Activated CD8-positive, alpha-beta T cell treated with anti-CD3 and anti-CD28 coated beads, Interleukin-2, amount 10 ng/mL, durations not matched to agents 7 days and 5 days (primary cell): ENCODE measurements at regions of chr1 and their contacts with region 1.

Region 1: DNA sequence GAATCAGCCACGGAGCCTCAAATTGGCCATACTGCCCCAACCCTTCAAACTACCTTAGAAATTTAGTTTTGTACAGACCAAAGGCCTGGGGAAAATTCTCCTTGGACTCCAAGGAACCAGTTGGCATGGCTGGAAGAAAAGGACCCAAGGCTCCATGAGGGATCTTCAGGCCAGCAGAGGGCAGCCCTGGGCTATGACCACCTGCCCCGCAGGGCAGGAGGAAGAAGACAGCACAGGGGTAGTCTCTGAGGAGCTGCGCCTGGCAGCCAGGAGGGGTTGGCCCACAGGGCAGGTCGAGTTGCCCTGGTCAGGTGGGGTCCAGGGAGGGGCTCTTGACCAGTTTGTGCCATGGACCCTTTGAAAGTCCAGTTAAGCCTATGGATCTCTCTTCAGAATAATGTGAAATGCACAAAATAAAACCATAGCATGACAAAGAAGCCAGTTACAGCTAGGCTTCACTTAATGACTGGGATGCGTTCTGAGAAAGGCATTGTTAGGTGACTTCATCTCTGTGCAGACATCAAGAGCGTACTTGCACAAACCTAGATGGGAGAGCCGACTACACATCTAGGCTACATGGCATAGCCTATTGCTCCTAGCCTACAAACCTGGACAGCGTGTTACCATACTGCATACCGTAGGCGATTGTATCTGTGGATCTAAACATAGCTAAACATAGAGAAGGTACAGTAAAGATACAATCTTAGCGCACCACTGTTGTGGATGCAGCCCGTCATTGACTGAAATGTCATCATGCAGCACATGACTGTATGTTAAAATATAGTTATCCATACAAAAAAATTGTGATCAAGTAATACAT is 26.1 kb downstream of the CACNA1S start:
- DNase-seq: peak; percentile 47
- ATAC-seq: peak; percentile 82
- H3K4me3 Mint-ChIP-seq: no peak overlapping the region
- H3K27ac Mint-ChIP-seq: no peak overlapping the region
- H3K4me1 Mint-ChIP-seq: no peaks in the 10 kb centered on the region
- H3K27me3 Mint-ChIP-seq: peaks cover 5% of the 10 kb centered on the region

Region 2: GRCh38 chr1:200774735-200775444 is 311.2 kb before region 1 on chr1:
- CTCF ChIA-PET with region 1: no interaction called
- POLR2A ChIA-PET with region 1: no interaction called
- DNase-seq: no peak
- ATAC-seq: no peak
- H3K4me3 Mint-ChIP-seq: no peak overlapping the region
- H3K27ac Mint-ChIP-seq: no peak overlapping the region
- H3K4me1 Mint-ChIP-seq: no peaks in the 10 kb centered on the region
- H3K27me3 Mint-ChIP-seq: no peaks in the 10 kb centered on the region

Region 3: GRCh38 chr1:200866521-200866920 is 219.6 kb before region 1 on chr1:
- CTCF ChIA-PET with region 1: no interaction called
- POLR2A ChIA-PET with region 1: no interaction called
- DNase-seq: peak; percentile 69
- ATAC-seq: peak; percentile 87
- H3K4me3 Mint-ChIP-seq: no peak overlapping the region
- H3K27ac Mint-ChIP-seq: no peak overlapping the region
- H3K4me1 Mint-ChIP-seq: peaks cover 57% of the 10 kb centered on the region
- H3K27me3 Mint-ChIP-seq: peaks cover 23% of the 10 kb centered on the region

Region 4: DNA sequence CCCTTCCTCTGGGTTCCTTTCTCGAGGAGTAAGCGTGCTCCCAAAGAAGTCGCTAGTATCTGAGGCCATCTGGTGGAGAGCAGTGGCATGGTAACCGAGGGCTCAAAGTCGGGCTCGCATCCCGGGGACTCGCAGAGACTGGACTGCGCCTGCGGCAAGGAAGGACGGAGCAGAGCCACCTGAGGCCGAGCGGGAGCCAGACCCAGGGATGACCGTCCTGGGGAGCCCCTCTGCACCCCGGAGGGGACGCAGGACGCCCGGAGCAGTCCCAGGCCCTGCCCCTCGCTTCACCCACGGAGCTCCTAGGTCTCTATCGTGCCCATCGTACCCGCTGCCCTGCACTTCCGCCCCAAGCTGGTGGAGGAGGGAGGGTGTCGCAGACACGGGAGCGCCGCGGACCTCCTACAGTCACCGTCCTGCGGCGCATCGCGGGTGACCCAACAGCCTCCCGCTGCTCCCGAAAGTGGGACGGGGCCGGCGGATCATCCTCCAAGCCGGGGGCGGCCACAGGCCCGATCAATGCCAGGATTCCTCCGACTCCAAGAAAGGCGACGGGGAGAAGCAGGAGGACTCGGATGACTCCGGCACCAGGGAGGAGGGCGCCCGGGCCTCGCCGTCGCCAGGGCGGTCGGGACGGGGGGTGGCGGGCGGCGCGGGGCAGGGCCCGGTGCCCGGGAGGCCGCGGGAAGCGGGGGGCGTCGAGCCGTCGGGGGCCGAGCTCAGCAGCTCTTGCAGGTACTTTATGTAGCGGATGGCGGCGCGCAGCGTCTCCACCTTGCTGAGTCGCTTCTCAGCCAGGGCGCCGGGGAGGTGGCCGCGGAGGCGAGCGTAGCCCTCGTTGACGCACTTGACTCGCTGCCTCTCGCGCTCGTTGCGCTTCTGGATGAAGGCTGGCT is 28.4 kb after region 1 on chr1:
- CTCF ChIA-PET with region 1: interaction called, 22 read pairs
- POLR2A ChIA-PET with region 1: no interaction called
- DNase-seq: peak; percentile 79
- ATAC-seq: peak; percentile 91
- H3K4me3 Mint-ChIP-seq: peak overlapping the region; percentile 74
- H3K27ac Mint-ChIP-seq: peak overlapping the region; percentile 63
- H3K4me1 Mint-ChIP-seq: peaks cover 8% of the 10 kb centered on the region
- H3K27me3 Mint-ChIP-seq: peaks cover 11% of the 10 kb centered on the region

Region 5: DNA sequence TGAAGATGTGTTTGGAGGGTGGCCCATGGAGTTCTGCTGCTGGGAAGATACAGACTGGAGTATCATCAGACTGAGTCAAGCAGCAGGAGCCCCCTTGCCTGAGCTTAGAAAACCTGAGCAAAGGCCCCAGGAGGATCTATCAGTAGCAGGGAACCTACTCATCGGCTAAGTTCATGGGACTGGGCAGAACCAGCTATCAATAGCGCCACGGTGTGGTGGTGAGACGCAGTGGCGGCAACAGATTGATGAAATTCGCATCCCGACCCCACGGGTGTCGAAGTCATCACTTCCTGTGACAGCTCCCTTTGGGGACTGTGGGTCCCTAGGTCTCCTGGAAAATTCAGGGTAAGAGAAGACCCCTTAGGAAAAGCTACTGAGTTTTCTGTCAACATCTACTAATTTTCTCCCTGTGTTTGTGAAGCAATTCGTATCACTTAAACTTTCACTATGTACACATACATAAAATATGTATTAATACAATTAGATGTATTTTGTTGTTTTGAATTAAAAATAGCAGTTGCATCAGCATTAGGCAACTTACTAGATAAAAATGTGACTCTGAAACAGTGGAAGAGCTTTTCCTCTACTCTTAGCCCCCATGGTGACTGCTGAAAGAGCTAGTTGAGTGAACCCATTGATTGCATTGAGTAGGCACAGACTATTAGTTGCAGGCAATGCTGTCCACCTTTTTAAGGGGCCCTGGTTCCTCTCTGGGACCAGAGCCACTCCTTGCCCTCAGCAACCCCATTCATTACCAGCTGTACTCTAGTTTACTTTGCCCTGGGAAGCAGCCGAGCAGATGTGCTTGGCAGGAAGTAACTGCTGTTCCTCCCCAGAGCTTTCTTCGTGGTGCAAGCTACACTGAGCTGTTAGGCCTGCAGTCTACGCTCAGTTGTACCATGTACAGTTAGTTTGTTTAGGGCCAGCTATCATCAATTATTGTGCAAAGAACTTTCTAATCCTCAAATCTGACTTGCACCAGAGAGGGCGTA is 33.4 kb after region 1 on chr1:
- CTCF ChIA-PET with region 1: interaction called, 22 read pairs
- POLR2A ChIA-PET with region 1: no interaction called
- DNase-seq: peak; percentile 66
- ATAC-seq: no peak
- H3K4me3 Mint-ChIP-seq: no peak overlapping the region
- H3K27ac Mint-ChIP-seq: no peak overlapping the region
- H3K4me1 Mint-ChIP-seq: peaks cover 7% of the 10 kb centered on the region
- H3K27me3 Mint-ChIP-seq: peaks cover 15% of the 10 kb centered on the region